Panc1 (cell line): ENCODE measurements at regions of chr1 and their contacts with region 1.

Region 1: DNA sequence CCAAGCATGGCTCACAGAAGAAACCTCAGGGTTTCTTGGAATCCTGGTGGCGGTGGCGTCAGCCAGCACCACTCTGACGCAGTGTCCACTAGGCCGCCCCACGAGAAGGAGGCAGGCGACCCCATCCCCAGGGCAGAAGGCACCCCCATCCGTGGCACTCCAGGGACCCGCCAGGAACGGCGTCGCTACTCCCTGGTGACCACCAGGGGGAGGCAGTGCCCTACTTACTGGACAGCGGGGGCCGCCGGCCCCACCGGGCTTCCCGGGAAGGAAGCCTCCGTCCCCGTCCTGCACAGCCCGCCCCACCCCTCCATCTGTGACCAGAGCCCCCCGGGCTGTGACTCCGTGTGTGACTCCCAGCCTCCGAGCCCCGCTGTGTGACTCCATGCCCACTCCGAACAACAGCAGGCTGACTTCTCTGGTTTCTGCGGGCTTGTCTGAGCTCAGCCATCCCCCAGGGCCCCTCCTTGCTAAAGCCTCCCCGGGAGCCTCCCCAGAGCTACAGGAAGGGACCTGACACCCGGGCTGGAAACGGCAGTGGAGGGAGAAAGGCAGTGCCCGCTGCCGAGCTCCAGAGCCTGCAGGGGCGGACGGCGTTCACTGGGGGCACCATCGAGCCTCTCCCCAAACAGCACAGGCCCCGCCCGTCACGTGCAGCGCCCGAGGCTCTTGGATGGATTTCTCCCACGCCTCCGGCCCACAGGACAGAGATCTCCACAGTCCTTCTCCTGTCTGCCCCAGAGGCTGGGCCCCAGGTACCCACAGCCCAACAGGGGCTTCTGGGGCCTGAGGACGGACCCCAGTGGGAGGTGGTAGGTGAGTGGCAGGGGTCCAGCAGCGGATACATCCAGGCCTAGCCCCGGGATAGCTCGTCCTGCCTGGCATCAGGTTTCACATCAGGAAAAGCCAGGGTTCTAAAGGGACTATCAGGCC is 21.1 kb downstream of the KIF17 start:
- DNase-seq: peak; percentile 42
- ATAC-seq: peak; percentile 91
- H3K4me3 ChIP-seq: peak overlapping the region; percentile 51 to 65
- H3K27ac ChIP-seq: peak overlapping the region; percentile 80
- H3K4me1 ChIP-seq: peaks cover 5% of the 10 kb centered on the region
- H3K27me3 ChIP-seq: no peaks in the 10 kb centered on the region
- CTCF ChIP-seq: peak; percentile 97

Region 2: GRCh38 chr1:21200767-21201166 is 504.1 kb after region 1 on chr1:
- CTCF ChIA-PET with region 1: interaction called, 8 read pairs
- POLR2A ChIA-PET with region 1: no interaction called
- in situ Hi-C with region 1: no loop called
- intact Hi-C with region 1: loop called (anchors 5 kb)
- DNase-seq: no peak
- ATAC-seq: no peak
- H3K4me3 ChIP-seq: no peak overlapping the region
- H3K27ac ChIP-seq: no peak overlapping the region
- H3K4me1 ChIP-seq: no peaks in the 10 kb centered on the region; the same call in 1 of the 2 replicates
- H3K27me3 ChIP-seq: no peaks in the 10 kb centered on the region
- CTCF ChIP-seq: no peak